B cell (primary cell): ENCODE measurements at regions of chr5 and their contacts with region 1.

Region 1: GRCh38 chr5:139844472-139845145 is 49.0 kb downstream of the PSD2 start:
- DNase-seq: peak; percentile 83
- ATAC-seq: peak; percentile 26
- H3K4me3 ChIP-seq: no peak overlapping the region
- H3K4me3 Mint-ChIP-seq: peak overlapping the region; percentile 17
- H3K27ac ChIP-seq: no peak overlapping the region
- H3K27ac Mint-ChIP-seq: peak overlapping the region; percentile 64
- H3K4me1 ChIP-seq: peaks cover 8 to 16% of the 10 kb centered on the region in 2 donors
- H3K4me1 Mint-ChIP-seq: peaks cover 15% of the 10 kb centered on the region
- H3K27me3 ChIP-seq: peaks cover 0 to 36% (median 18%) of the 10 kb centered on the region in 4 experiments
- H3K27me3 Mint-ChIP-seq: peaks cover 30% of the 10 kb centered on the region
- CTCF ChIP-seq: peak; percentile 85

Region 2: DNA sequence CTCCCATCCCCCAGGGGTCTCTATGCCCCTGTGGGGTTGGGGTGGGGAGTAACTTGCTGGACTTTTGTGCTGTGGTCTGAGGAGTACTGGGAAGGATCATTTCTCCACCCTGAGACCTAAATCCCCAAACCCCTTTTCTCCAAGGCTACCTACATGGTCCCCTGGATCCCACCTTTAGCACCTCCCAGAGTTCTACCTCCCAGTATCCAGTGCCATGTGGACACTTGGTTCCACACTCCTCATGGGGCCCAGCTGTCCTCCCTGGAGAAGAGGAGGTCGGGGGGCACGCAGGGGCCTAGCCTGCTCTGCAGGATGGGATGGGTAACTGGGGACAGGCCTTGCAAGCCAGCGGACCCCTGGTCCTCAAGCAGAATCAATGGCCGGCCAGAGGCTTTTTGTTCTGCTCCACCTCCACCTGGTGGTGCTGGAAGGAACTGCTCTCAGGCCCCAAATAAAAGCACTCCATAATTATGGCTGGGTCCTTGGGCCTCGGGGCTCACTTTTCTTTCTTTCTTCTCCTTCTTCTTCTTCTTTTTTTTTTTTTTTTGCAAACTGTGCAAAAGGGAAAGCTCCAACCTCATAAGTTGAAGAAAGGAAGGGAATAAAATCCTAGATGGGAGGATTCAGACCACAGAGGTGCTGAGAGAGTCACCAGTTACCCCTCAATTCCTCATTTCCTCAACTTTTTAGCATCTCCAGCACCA is 19.4 kb after region 1 on chr5:
- CTCF ChIA-PET with region 1: interaction called, 15 read pairs
- POLR2A ChIA-PET with region 1: no interaction called
- intact Hi-C with region 1: no loop called
- DNase-seq: peak; percentile 73
- ATAC-seq: peak; percentile 85
- H3K4me3 ChIP-seq: no peak overlapping the region
- H3K4me3 Mint-ChIP-seq: no peak overlapping the region
- H3K27ac ChIP-seq: no peak overlapping the region
- H3K27ac Mint-ChIP-seq: no peak overlapping the region
- H3K4me1 ChIP-seq: peaks cover 0 to 3% of the 10 kb centered on the region in 2 donors
- H3K4me1 Mint-ChIP-seq: peaks cover 7% of the 10 kb centered on the region
- H3K27me3 ChIP-seq: peaks cover 0 to 6% (median 1%) of the 10 kb centered on the region in 4 experiments
- H3K27me3 Mint-ChIP-seq: peaks cover 23% of the 10 kb centered on the region
- CTCF ChIP-seq: peak; percentile 92

Region 3: DNA sequence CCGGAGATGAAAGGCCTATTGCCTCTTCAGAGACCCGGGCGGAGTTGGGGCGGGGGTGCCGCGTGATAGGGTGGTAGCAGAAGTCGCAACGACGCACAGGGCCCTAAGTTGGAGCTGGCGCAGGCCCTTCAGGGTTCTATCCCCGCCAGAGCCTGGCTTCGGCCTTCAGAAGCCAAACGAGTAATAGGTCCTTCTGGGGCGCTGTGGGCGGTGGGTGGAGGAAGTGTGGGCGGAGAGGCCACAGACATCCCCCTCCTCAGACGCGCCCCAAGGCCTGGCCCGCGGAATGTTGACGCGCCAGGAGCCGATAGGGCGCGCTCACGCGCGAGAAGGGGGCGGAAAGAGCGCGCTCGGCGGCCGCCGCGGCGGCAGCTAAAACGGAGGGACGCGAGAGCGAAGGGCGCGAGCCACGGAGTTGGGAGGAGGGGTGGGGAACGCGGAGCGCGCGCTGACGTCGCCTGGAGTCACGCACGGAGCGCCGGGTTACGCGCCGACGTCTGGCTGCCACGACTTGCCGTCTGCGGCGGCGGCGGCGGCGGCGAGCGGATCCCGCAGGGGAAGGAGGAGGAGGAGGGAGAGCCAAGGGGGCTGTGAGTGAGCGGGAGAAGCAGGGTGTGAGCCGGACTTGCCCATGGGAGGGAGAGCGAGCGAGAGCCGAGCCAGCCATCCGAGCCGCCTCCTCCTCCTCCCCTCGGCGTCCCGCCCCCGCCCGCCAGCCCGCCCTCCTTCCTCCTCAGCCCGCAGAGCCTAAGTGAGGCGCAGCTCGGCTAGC is 262.9 kb after region 1 on chr5:
- CTCF ChIA-PET with region 1: no interaction called
- POLR2A ChIA-PET with region 1: no interaction called
- intact Hi-C with region 1: loop called (anchors 5 kb)
- DNase-seq: peak; percentile 98
- ATAC-seq: peak; percentile 85
- H3K4me3 ChIP-seq: peak overlapping the region in 4 of 5 experiments; percentile 60 to 75 (median 68)
- H3K4me3 Mint-ChIP-seq: peak overlapping the region; percentile 96
- H3K27ac ChIP-seq: peak overlapping the region; percentile 97 to 99
- H3K27ac Mint-ChIP-seq: peak overlapping the region; percentile 99
- H3K4me1 ChIP-seq: peaks cover 35% of the 10 kb centered on the region in 2 donors
- H3K4me1 Mint-ChIP-seq: peaks cover 46% of the 10 kb centered on the region
- H3K27me3 ChIP-seq: peaks cover 5 to 23% (median 13%) of the 10 kb centered on the region in 4 experiments
- H3K27me3 Mint-ChIP-seq: peaks cover 20% of the 10 kb centered on the region
- CTCF ChIP-seq: peak; percentile 43